ENCODE measurements at regions of chr11 and their contacts with region 1.

Region 1: GRCh38 chr11:60363542-60364510 is 14.5 kb upstream of the MS4A7 start:
- DNase-seq: peak; percentile 60
- CTCF ChIP-seq: peak; percentile 66

Region 2: DNA sequence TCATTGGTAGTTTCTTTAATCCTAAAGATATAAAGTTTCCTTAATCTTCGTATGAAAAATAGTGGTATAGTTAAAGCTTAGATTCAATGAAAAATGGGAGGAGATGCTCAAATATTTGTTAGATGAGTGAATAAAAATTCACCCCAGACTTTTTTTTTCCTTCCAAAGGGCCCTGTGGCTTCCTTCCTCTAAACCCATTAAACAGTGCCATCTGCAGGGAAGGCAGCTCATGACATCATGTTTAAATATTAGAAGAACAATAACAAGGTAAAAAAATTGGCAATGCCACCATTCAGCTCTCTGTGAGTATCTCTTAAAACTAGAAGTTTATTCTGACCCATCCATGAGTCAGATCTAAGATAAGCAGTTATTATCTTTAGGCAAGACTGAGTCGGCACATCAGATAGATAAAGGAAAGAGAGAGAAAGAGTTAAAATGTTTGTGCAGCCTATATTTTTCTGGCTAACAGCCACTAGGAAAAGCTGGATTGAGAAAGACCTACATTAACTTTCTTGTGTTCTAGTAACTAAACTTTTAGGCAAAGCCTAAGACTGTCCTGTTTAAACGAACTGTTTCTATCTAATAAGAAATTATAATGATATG is 444.7 kb before region 1 on chr11:
- CTCF ChIA-PET with region 1: no interaction called
- POLR2A ChIA-PET with region 1: no interaction called
- DNase-seq: peak; percentile 21
- CTCF ChIP-seq: peak; percentile 31

Region 3: GRCh38 chr11:60265373-60266214 is 98.2 kb before region 1 on chr11:
- CTCF ChIA-PET with region 1: interaction called, 15 read pairs
- POLR2A ChIA-PET with region 1: no interaction called
- DNase-seq: peak; percentile 31
- CTCF ChIP-seq: peak; percentile 70

Region 4: DNA sequence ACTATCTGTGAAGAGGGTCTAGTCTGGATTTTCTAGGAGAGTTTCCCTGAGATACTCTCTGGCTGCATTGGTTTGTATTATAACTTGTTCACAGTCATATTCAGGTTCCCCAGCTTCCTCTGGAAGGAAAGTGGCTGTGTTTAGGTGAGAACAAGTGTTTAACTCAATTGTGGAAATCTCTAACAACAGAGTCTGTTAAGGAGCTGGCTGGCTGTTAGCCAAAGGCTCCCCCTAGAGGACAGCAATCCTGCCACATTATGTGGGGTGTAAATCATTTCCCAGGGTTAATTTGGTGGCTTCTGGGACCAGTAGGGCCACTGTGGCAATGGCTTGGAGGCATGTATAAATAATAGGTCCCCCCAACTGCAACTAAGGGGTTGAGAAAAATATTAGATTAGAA is 18.3 kb before region 1 on chr11:
- CTCF ChIA-PET with region 1: interaction called, 73 read pairs
- POLR2A ChIA-PET with region 1: no interaction called
- DNase-seq: no peak
- CTCF ChIP-seq: peak; percentile 62

Region 5: GRCh38 chr11:60389279-60389910 is 25.6 kb after region 1 on chr11:
- CTCF ChIA-PET with region 1: interaction called, 13 read pairs
- POLR2A ChIA-PET with region 1: no interaction called
- DNase-seq: peak; percentile 29
- CTCF ChIP-seq: no peak

Region 6: DNA sequence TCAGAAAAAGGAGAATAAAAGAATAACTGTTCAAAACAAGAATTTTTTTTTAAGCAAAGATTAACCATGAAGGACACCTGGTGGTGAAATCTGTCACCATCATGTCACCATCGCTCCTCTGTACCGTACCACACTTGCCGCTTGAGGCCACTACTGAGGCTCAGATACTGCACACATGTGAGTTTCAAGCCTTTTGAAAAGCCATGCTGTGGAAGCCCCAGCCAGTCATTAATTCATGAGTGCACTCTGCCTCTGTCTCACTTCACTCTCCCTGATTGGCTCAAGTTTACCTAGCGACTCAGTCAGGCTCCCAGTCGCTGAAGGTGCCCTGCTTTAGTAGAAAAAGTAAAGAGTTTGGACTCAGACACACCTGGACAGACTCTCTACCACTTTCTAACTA is 122.2 kb after region 1 on chr11:
- CTCF ChIA-PET with region 1: interaction called, 45 read pairs
- POLR2A ChIA-PET with region 1: no interaction called
- DNase-seq: peak; percentile 85
- CTCF ChIP-seq: peak; percentile 92

Region 7: DNA sequence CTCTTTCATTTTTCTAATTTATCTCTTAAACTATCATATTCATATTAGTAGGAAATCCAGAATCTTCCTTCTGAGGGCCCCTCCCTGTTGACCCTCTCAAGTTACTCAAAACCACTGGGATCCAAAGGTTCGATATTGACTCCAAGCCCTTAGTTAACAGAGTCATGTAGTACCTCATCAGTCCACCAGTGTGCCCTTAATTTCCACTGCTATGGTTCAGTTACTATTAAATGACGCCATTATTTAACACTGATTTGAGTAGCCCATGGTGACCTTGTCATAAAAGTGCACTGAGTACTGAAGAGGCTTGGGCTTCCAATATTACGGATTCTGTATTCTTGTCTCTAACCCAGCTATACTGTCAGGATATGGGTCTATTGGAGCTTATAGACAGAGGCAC is 243.7 kb after region 1 on chr11:
- CTCF ChIA-PET with region 1: interaction called, 12 read pairs
- POLR2A ChIA-PET with region 1: no interaction called
- DNase-seq: no peak
- CTCF ChIP-seq: no peak

Region 8: DNA sequence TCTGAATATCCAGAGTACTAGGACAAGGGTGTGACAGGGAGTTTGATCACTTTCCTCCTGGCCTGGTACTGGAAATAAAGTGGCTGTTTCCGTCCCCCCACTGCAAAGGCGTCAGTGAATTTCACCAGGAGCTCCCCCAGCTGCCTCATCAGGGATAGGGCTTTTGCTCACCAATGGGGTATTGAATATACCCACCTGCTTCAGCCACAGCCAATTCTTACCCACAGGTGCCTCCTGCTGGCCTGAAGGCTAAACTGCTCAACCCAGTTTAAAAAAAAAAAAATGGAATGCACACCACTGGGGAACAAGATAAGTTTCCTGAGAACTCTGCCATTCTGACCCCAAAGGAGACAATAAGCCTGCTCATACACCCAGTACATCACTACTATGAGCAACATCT is 270.3 kb after region 1 on chr11:
- CTCF ChIA-PET with region 1: interaction called, 10 read pairs
- POLR2A ChIA-PET with region 1: no interaction called
- DNase-seq: peak; percentile 31
- CTCF ChIP-seq: peak; percentile 40